ENCODE measurements at regions of chr2 and their contacts with region 1.

Region 1: GRCh38 chr2:142603759-142604158 is 273.7 kb upstream of the KYNU start:
- DNase-seq: no peak
- H3K4me3 ChIP-seq: no peak overlapping the region
- H3K4me3 Mint-ChIP-seq: no peak overlapping the region
- H3K27ac Mint-ChIP-seq: no peak overlapping the region
- H3K4me1 ChIP-seq: no peaks in the 10 kb centered on the region
- H3K4me1 Mint-ChIP-seq: no peaks in the 10 kb centered on the region
- H3K27me3 ChIP-seq: no peaks in the 10 kb centered on the region
- H3K27me3 Mint-ChIP-seq: no peaks in the 10 kb centered on the region
- CTCF ChIP-seq: no peak

Region 2: DNA sequence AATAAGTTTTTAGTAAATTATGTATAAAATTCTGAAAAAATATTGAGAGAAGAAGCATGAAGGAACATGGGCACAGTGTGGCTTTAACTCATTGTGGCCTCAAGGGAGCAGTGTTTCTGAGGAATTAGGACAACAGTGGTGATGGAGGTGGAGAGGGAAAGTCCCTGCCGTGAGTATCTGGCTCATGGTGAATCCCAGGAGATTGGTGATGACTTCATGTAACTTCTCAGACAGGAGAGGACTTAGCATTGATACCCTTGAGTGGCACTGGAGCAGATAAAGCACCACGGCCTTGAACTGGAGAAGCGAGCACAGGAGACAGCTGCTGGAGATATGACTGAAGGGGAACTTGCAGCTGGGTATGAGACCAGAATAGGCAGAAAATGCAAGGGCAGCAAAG is 438.0 kb before region 1 on chr2:
- CTCF ChIA-PET with region 1: no interaction called
- POLR2A ChIA-PET with region 1: no interaction called
- intact Hi-C with region 1: loop called (anchors 5 kb)
- DNase-seq: peak in 1 of 2 experiments; percentile 17
- H3K4me3 ChIP-seq: no peak overlapping the region
- H3K4me3 Mint-ChIP-seq: no peak overlapping the region
- H3K27ac Mint-ChIP-seq: no peak overlapping the region
- H3K4me1 ChIP-seq: no peaks in the 10 kb centered on the region
- H3K4me1 Mint-ChIP-seq: no peaks in the 10 kb centered on the region
- H3K27me3 ChIP-seq: no peaks in the 10 kb centered on the region
- H3K27me3 Mint-ChIP-seq: no peaks in the 10 kb centered on the region
- CTCF ChIP-seq: peak in 1 of 2 experiments; percentile 34

Region 3: GRCh38 chr2:142557391-142557790 is 46.4 kb before region 1 on chr2:
- CTCF ChIA-PET with region 1: no interaction called
- POLR2A ChIA-PET with region 1: no interaction called
- intact Hi-C with region 1: no loop called
- DNase-seq: no peak
- H3K4me3 ChIP-seq: no peak overlapping the region
- H3K4me3 Mint-ChIP-seq: no peak overlapping the region
- H3K27ac Mint-ChIP-seq: no peak overlapping the region
- H3K4me1 ChIP-seq: no peaks in the 10 kb centered on the region
- H3K4me1 Mint-ChIP-seq: no peaks in the 10 kb centered on the region
- H3K27me3 ChIP-seq: no peaks in the 10 kb centered on the region
- H3K27me3 Mint-ChIP-seq: peaks cover 7% of the 10 kb centered on the region
- CTCF ChIP-seq: no peak

Region 4: GRCh38 chr2:142682528-142682927 is 78.8 kb after region 1 on chr2:
- CTCF ChIA-PET with region 1: no interaction called
- POLR2A ChIA-PET with region 1: no interaction called
- intact Hi-C with region 1: no loop called
- DNase-seq: peak in 1 of 2 experiments; percentile 5
- H3K4me3 ChIP-seq: no peak overlapping the region
- H3K4me3 Mint-ChIP-seq: no peak overlapping the region
- H3K27ac Mint-ChIP-seq: no peak overlapping the region
- H3K4me1 ChIP-seq: no peaks in the 10 kb centered on the region
- H3K4me1 Mint-ChIP-seq: no peaks in the 10 kb centered on the region
- H3K27me3 ChIP-seq: no peaks in the 10 kb centered on the region
- H3K27me3 Mint-ChIP-seq: no peaks in the 10 kb centered on the region
- CTCF ChIP-seq: no peak

Measured in Caco-2 (cell line).